ENCODE measurements at regions of chr19 and their contacts with region 1.

Region 1: GRCh38 chr19:48152551-48152950 is 17.6 kb downstream of the LIG1 start:
- DNase-seq: peak; percentile 74
- H3K4me3 Mint-ChIP-seq: no peak overlapping the region
- H3K27ac Mint-ChIP-seq: no peak overlapping the region
- H3K4me1 Mint-ChIP-seq: peaks cover 1% of the 10 kb centered on the region
- H3K27me3 Mint-ChIP-seq: no peaks in the 10 kb centered on the region

Region 2: GRCh38 chr19:48081106-48081505 is 71.4 kb before region 1 on chr19:
- CTCF ChIA-PET with region 1: no interaction called
- POLR2A ChIA-PET with region 1: no interaction called
- DNase-seq: no peak
- H3K4me3 Mint-ChIP-seq: no peak overlapping the region
- H3K27ac Mint-ChIP-seq: no peak overlapping the region
- H3K4me1 Mint-ChIP-seq: no peaks in the 10 kb centered on the region
- H3K27me3 Mint-ChIP-seq: no peaks in the 10 kb centered on the region

Region 3: GRCh38 chr19:48110350-48110966 is 42.1 kb before region 1 on chr19 and contains the start of gene PLA2G4C:
- CTCF ChIA-PET with region 1: interaction called, 59 read pairs
- POLR2A ChIA-PET with region 1: interaction called, 6 read pairs
- DNase-seq: peak; percentile 83
- H3K4me3 Mint-ChIP-seq: peak within 1 kb of the TSS; percentile 77
- H3K27ac Mint-ChIP-seq: peak within 1 kb of the TSS; percentile 74
- H3K4me1 Mint-ChIP-seq: peaks cover 25% of the 10 kb centered on the region
- H3K27me3 Mint-ChIP-seq: no peaks in the 10 kb centered on the region
- total RNA-seq, gene PLA2G4C: 10.8 to 11.5 TPM

Region 4: GRCh38 chr19:48218997-48219396 is 66.4 kb after region 1 on chr19:
- CTCF ChIA-PET with region 1: no interaction called
- POLR2A ChIA-PET with region 1: no interaction called
- DNase-seq: no peak
- H3K4me3 Mint-ChIP-seq: no peak overlapping the region
- H3K27ac Mint-ChIP-seq: peak overlapping the region; percentile 40
- H3K4me1 Mint-ChIP-seq: no peaks in the 10 kb centered on the region
- H3K27me3 Mint-ChIP-seq: no peaks in the 10 kb centered on the region